ENCODE measurements at regions of chr15 and their contacts with region 1.

Region 1: GRCh38 chr15:53346583-53346982 is 412.9 kb downstream of the WDR72 start:
- DNase-seq: no peak
- H3K4me3 ChIP-seq: no peak overlapping the region
- H3K27ac ChIP-seq: no peak overlapping the region
- H3K4me1 ChIP-seq: no peaks in the 10 kb centered on the region
- H3K27me3 ChIP-seq: no peaks in the 10 kb centered on the region
- CTCF ChIP-seq: no peak
- EP300 ChIP-seq: no peak
- POLR2A ChIP-seq: no peak

Region 2: DNA sequence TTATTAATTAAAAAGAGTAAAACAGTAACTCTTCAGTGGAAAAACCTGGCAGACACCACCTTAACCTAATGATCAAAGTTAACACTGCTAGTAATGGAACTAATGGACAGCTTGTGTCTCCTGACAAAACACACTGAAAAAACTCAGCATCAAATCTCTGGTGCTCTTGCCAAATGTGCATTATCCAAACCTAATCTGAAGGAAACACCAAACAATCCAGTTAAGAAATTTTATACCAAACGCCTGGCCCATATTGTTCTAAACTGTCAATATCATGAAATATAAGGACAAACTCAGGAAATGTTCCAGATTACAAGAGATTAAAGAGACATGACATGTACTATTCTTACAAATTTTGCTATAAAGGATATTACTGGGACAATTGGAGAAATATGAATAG is 1839.7 kb after region 1 on chr15:
- intact Hi-C with region 1: loop called in 1 of 4 experiments (anchors 5 kb)
- DNase-seq: no peak
- H3K4me3 ChIP-seq: no peak overlapping the region
- H3K27ac ChIP-seq: no peak overlapping the region
- H3K4me1 ChIP-seq: no peaks in the 10 kb centered on the region
- H3K27me3 ChIP-seq: no peaks in the 10 kb centered on the region
- CTCF ChIP-seq: no peak
- EP300 ChIP-seq: no peak
- POLR2A ChIP-seq: no peak

Measured in ovary (tissue), 10 donors.